Activated CD4-positive, alpha-beta memory T cell treated with anti-CD3 and anti-CD28 coated beads, Interleukin-2, amount 10 ng/mL, durations not matched to agents 7 days and 5 days (primary cell): ENCODE measurements at regions of chr14 and their contacts with region 1.

Region 1: GRCh38 chr14:22570132-22570949 is 18.7 kb downstream of the DAD1 start:
- DNase-seq: peak; percentile 91
- H3K4me3 Mint-ChIP-seq: peak overlapping the region; percentile 82
- H3K27ac Mint-ChIP-seq: peak overlapping the region; percentile 95
- H3K4me1 Mint-ChIP-seq: peaks cover 70% of the 10 kb centered on the region
- H3K27me3 Mint-ChIP-seq: no peaks in the 10 kb centered on the region

Region 2: GRCh38 chr14:21917699-21918436 is 652.5 kb before region 1 on chr14:
- CTCF ChIA-PET with region 1: interaction called, 45 read pairs
- POLR2A ChIA-PET with region 1: interaction called, 17 read pairs
- DNase-seq: peak; percentile 66
- H3K4me3 Mint-ChIP-seq: peak overlapping the region; percentile 71
- H3K27ac Mint-ChIP-seq: peak overlapping the region; percentile 74
- H3K4me1 Mint-ChIP-seq: peaks cover 69% of the 10 kb centered on the region
- H3K27me3 Mint-ChIP-seq: no peaks in the 10 kb centered on the region

Region 3: DNA sequence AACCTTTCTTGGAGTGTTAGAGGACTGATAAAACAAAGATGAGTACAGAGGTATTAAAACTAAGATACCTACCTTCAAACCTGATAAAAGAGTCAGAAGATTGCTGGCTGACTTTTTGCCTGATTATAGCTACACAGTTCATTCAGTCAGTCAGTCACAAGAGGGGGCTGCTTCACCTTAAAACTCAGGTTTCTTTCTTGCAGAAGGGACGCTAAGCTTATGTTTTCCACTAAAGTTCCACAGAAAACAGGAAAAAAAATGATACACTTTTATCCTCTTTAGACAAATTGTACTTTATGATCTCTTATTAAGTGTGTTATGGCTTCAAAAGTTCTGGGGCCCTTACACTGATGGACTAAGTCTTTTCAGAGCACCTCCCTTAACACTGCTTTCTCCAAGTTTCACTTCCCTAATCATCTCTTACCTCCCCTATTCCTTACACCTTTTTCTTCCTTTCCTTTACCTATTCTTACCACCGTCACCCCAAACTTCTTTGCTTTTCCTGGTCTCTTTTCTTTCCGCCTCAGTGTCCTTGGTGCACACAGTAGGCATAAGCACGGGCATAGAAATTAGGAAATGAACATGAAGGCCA is 448.0 kb before region 1 on chr14:
- CTCF ChIA-PET with region 1: interaction called, 15 read pairs
- POLR2A ChIA-PET with region 1: interaction called, 8 read pairs
- DNase-seq: no peak
- H3K4me3 Mint-ChIP-seq: peak overlapping the region; percentile 80
- H3K27ac Mint-ChIP-seq: peak overlapping the region; percentile 82
- H3K4me1 Mint-ChIP-seq: peaks cover 22% of the 10 kb centered on the region
- H3K27me3 Mint-ChIP-seq: no peaks in the 10 kb centered on the region

Region 4: GRCh38 chr14:22536853-22537338 is 33.4 kb before region 1 on chr14:
- CTCF ChIA-PET with region 1: interaction called, 26 read pairs
- POLR2A ChIA-PET with region 1: interaction called, 288 read pairs
- DNase-seq: peak; percentile 84
- H3K4me3 Mint-ChIP-seq: peak overlapping the region; percentile 69
- H3K27ac Mint-ChIP-seq: peak overlapping the region; percentile 87
- H3K4me1 Mint-ChIP-seq: peaks cover 95% of the 10 kb centered on the region
- H3K27me3 Mint-ChIP-seq: no peaks in the 10 kb centered on the region

Region 5: DNA sequence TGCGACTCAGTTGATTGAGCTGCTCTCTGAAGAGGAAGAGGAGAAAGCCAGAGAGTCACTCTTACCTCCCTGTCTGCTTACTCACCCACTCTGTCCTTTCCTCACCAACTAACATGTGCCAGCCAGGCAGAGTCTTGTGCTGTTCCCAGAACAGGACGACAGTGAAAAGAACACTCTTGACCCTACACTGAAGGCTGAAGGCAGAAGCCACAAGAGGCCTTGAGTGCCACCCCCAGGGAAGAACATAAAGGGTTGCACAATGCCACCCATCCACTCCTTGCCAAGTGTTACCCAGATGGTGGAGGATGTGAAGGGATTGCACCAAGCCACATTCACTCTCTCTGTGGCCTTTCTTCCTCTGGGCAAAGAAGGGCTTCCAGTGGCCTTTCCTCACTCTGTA is 40.6 kb after region 1 on chr14:
- CTCF ChIA-PET with region 1: no interaction called
- POLR2A ChIA-PET with region 1: no interaction called
- DNase-seq: no peak
- H3K4me3 Mint-ChIP-seq: no peak overlapping the region
- H3K27ac Mint-ChIP-seq: no peak overlapping the region
- H3K4me1 Mint-ChIP-seq: no peaks in the 10 kb centered on the region
- H3K27me3 Mint-ChIP-seq: no peaks in the 10 kb centered on the region

Region 6: DNA sequence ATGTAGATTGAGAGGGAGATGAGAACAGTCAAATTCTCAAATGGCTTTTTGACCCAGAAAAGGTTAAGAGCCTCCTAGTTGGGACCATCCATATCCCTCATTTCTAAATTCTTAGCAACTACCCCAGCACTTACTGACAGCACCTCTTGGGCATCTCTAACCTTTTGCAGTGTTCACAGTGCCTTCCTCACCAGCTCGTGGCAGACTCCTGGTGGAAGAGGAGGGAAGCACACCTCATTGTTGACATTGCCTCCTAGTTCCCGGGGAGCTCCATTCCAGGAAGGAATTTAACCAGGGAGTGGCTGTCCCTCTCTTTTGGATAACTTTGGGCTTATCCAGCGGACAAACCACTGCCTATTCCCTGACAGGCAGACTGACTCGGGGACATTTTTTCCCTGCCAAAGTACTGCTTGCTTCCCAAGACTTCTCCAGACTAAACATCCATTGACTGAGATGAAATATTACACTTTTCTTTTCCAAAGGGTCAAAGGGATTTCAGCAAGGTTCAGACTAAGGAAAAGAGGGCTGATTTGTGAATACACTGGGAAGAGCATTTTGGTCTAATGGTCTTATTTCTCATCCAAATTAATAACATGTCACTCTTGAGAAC is 82.8 kb after region 1 on chr14:
- CTCF ChIA-PET with region 1: interaction called, 65 read pairs
- POLR2A ChIA-PET with region 1: interaction called, 7 read pairs
- DNase-seq: peak; percentile 54
- H3K4me3 Mint-ChIP-seq: no peak overlapping the region
- H3K27ac Mint-ChIP-seq: no peak overlapping the region
- H3K4me1 Mint-ChIP-seq: no peaks in the 10 kb centered on the region
- H3K27me3 Mint-ChIP-seq: no peaks in the 10 kb centered on the region

Region 7: GRCh38 chr14:22872033-22872832 is 301.9 kb after region 1 on chr14:
- CTCF ChIA-PET with region 1: interaction called, 7 read pairs
- POLR2A ChIA-PET with region 1: interaction called, 10 read pairs
- DNase-seq: peak; percentile 76
- H3K4me3 Mint-ChIP-seq: peak overlapping the region; percentile 86
- H3K27ac Mint-ChIP-seq: peak overlapping the region; percentile 97
- H3K4me1 Mint-ChIP-seq: peaks cover 39% of the 10 kb centered on the region
- H3K27me3 Mint-ChIP-seq: no peaks in the 10 kb centered on the region